ENCODE measurements at regions of chr2 and their contacts with region 1.

Region 1: GRCh38 chr2:129484999-129485897 is 494.2 kb upstream of the RAB6C start:
- DNase-seq: no peak
- H3K4me3 ChIP-seq: no peak overlapping the region
- H3K27ac ChIP-seq: no peak overlapping the region
- H3K4me1 ChIP-seq: no peaks in the 10 kb centered on the region
- H3K27me3 ChIP-seq: no peaks in the 10 kb centered on the region
- CTCF ChIP-seq: no peak

Region 2: GRCh38 chr2:129554373-129554772 is 69.1 kb after region 1 on chr2:
- CTCF ChIA-PET with region 1: no interaction called
- dilution Hi-C with region 1: loop called (anchors 5 kb)
- in situ Hi-C with region 1: no loop called
- intact Hi-C with region 1: no loop called
- DNase-seq: no peak
- H3K4me3 ChIP-seq: no peak overlapping the region
- H3K27ac ChIP-seq: no peak overlapping the region
- H3K4me1 ChIP-seq: no peaks in the 10 kb centered on the region
- H3K27me3 ChIP-seq: no peaks in the 10 kb centered on the region
- CTCF ChIP-seq: no peak

Region 3: GRCh38 chr2:129646107-129646506 is 160.9 kb after region 1 on chr2:
- CTCF ChIA-PET with region 1: no interaction called
- dilution Hi-C with region 1: no loop called
- in situ Hi-C with region 1: no loop called
- intact Hi-C with region 1: no loop called
- DNase-seq: no peak
- H3K4me3 ChIP-seq: no peak overlapping the region
- H3K27ac ChIP-seq: no peak overlapping the region
- H3K4me1 ChIP-seq: no peaks in the 10 kb centered on the region
- H3K27me3 ChIP-seq: no peaks in the 10 kb centered on the region
- CTCF ChIP-seq: no peak

Measured in mammary epithelial cell (primary cell).